BJ (cell line): ENCODE measurements at regions of chr10 and their contacts with region 1.

Region 1: GRCh38 chr10:59625721-59626522 is 83.7 kb downstream of the SLC16A9 start:
- DNase-seq: peak; percentile 11
- H3K4me3 ChIP-seq: no peak overlapping the region
- H3K27me3 ChIP-seq: no peaks in the 10 kb centered on the region
- CTCF ChIP-seq: peak; percentile 69

Region 2: DNA sequence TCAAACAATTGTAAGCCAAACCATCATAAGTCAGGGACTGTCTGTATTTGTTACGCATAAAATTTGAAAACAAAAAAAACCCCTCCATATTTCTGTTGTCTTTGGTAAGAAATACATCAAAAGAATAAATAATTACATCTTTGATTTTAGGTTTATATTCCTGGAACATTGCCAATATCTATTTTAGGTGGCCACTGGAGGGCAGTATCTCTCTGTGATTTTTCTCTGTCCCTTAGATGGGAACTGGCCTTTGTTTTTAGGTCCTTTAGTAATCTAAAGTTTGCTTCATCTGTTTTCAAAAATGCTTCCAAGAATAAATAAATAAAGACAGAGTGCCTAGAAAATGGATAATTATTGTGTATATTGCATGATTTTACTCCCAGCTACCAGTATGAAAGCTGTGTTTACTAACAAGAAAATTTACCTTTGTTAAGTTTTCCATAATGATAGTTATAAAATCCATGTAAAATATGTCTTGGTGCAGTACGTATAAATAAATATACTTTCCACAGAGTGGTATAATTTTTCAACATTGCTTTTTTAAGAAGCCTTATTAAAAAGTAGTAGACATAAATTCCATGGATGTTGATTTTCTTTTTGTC is 385.2 kb before region 1 on chr10:
- CTCF ChIA-PET with region 1: interaction called, 24 read pairs
- POLR2A ChIA-PET with region 1: no interaction called
- DNase-seq: peak; percentile 2
- H3K4me3 ChIP-seq: no peak overlapping the region
- H3K27me3 ChIP-seq: peaks cover 2% of the 10 kb centered on the region; the same call in 1 of the 2 replicates
- CTCF ChIP-seq: peak; percentile 51

Region 3: GRCh38 chr10:59606551-59606961 is 19.4 kb before region 1 on chr10:
- CTCF ChIA-PET with region 1: interaction called, 27 read pairs
- POLR2A ChIA-PET with region 1: no interaction called
- DNase-seq: no peak
- H3K4me3 ChIP-seq: no peak overlapping the region
- H3K27me3 ChIP-seq: no peaks in the 10 kb centered on the region
- CTCF ChIP-seq: no peak

Region 4: GRCh38 chr10:59823111-59823510 is 197.2 kb after region 1 on chr10:
- CTCF ChIA-PET with region 1: interaction called, 11 read pairs
- POLR2A ChIA-PET with region 1: no interaction called
- DNase-seq: no peak
- H3K4me3 ChIP-seq: no peak overlapping the region
- H3K27me3 ChIP-seq: no peaks in the 10 kb centered on the region
- CTCF ChIP-seq: no peak

Region 5: DNA sequence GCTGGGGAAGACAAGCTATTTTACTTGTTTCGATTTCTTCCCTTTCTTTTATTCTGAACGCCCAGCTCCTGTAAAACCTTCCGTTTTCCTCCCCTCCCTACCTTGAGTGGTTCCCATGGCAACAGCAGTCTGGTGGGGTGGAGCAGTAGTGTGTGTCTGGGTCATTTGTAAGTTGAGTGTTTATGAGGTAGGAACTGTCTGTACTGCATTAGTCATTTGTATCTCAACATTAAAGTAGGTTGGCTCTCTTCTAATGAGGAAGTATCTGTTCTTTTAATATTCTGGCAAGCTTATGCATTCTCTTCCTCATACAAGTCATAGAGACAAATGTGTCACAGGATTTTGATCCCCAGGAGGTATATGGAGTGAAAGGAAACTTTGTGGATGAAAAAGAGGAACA is 365.7 kb after region 1 on chr10:
- CTCF ChIA-PET with region 1: no interaction called
- POLR2A ChIA-PET with region 1: no interaction called
- DNase-seq: peak; percentile 5
- H3K4me3 ChIP-seq: no peak overlapping the region
- H3K27me3 ChIP-seq: no peaks in the 10 kb centered on the region
- CTCF ChIP-seq: no peak

Region 6: DNA sequence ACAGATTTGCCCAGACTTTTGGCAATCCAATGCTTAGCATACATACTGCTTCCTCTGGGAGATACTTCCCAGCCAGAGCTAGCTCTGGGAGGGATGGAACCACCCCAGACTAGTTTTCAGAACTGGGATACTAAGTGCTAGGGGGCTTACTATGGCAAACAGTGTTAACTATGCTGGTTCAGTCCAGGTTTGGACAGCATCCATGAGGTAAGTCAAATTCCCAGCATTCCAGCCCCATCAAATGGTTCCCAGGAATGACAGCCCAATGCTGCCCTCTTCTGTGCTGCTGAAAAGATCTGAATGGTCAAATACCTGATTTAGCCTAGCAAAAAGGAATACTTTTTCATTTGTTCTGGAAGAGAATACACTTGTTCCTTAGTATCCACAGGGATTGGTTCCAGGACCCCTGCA is 422.2 kb after region 1 on chr10:
- CTCF ChIA-PET with region 1: interaction called, 13 read pairs
- POLR2A ChIA-PET with region 1: no interaction called
- DNase-seq: no peak
- H3K4me3 ChIP-seq: no peak overlapping the region
- H3K27me3 ChIP-seq: no peaks in the 10 kb centered on the region
- CTCF ChIP-seq: peak; percentile 23; the same call in 1 of the 2 replicates